Heart right ventricle (tissue), 16 donors: ENCODE measurements at regions of chr3 and their contacts with region 1.

Region 1: DNA sequence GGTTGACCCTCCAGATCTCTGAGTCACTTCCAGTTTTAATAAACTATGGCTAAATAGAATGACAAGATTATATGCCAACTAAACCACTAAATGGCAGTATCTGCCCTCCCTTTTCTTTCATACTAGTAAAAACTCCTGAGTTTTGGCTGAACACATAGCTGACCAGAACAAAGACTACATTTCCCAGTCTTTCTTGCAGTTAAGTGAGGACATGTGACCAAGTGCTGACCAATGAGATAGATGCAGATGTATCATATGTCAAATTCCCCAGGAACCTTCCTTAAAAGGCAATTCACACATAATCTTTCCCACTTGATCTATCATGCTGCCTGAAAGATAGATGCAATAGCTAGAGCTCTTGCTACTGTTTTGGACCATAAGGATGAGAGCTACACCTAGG is 191.3 kb downstream of the SHOX2 start:
- DNase-seq: no peak
- ATAC-seq: no peak
- H3K4me3 ChIP-seq: no peak overlapping the region
- H3K27ac ChIP-seq: no peak overlapping the region
- H3K4me1 ChIP-seq: no peaks in the 10 kb centered on the region
- H3K27me3 ChIP-seq: peaks cover 0 to 3% (median 0%) of the 10 kb centered on the region in 7 donors
- CTCF ChIP-seq: no peak

Region 2: GRCh38 chr3:157369727-157370421 is 545.0 kb before region 1 on chr3:
- intact Hi-C with region 1: loop called in 1 of 10 experiments (anchors 5 kb)
- DNase-seq: no peak
- ATAC-seq: peak in 5 of 8 donors; percentile 20 to 85 (median 52)
- H3K4me3 ChIP-seq: no peak overlapping the region
- H3K27ac ChIP-seq: no peak overlapping the region
- H3K4me1 ChIP-seq: peaks cover 0 to 13% (median 6%) of the 10 kb centered on the region in 9 donors
- H3K27me3 ChIP-seq: no peaks in the 10 kb centered on the region
- CTCF ChIP-seq: no peak

Region 3: GRCh38 chr3:157931517-157931916 is 16.6 kb after region 1 on chr3:
- intact Hi-C with region 1: no loop called
- DNase-seq: no peak
- ATAC-seq: no peak
- H3K4me3 ChIP-seq: no peak overlapping the region
- H3K27ac ChIP-seq: no peak overlapping the region
- H3K4me1 ChIP-seq: no peaks in the 10 kb centered on the region
- H3K27me3 ChIP-seq: no peaks in the 10 kb centered on the region
- CTCF ChIP-seq: no peak